Posterior cingulate gyrus (tissue), 11 donors: ENCODE measurements at regions of chr3 and their contacts with region 1.

Region 1: DNA sequence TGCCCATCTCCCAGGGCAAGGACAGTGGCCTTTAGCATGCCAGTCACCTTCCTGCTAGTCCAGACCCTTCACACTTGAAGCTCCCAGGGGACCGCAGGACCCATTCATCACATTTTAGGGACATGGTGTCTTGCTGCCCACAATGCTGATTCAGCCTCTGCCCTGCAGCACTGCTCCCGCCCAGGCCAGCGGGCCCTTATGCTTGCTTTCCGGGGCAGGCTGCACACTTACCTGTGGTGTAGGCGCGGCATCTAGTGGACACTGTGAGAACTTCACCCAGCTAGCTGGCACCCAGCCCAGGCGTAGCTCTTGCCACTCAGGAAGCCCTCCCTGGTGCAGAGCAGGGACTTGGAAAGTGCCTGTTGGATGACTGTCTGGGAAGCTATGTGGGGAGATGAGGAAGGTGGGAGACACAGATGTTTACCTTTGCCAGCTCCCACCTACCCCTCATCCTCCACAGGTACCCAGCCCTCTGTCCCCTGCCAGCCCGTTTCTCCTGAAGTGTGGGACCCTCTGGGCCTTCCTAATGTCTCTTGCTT is 26.2 kb upstream of the NR2C2 start:
- DNase-seq: peak; percentile 65 to 98 (median 87)

Region 2: GRCh38 chr3:14203521-14204079 is 717.5 kb before region 1 on chr3:
- intact Hi-C with region 1: loop called (anchors 10 kb)
- DNase-seq: peak in 7 of 10 donors; percentile 33 to 94 (median 74)

Region 3: GRCh38 chr3:14508961-14509795 is 412.0 kb before region 1 on chr3:
- intact Hi-C with region 1: loop called (anchors 2 kb)
- DNase-seq: peak in 9 of 10 donors; percentile 42 to 94 (median 66)

Region 4: GRCh38 chr3:14678015-14678503 is 243.1 kb before region 1 on chr3:
- intact Hi-C with region 1: loop called (anchors 1 kb)
- DNase-seq: no peak

Region 5: DNA sequence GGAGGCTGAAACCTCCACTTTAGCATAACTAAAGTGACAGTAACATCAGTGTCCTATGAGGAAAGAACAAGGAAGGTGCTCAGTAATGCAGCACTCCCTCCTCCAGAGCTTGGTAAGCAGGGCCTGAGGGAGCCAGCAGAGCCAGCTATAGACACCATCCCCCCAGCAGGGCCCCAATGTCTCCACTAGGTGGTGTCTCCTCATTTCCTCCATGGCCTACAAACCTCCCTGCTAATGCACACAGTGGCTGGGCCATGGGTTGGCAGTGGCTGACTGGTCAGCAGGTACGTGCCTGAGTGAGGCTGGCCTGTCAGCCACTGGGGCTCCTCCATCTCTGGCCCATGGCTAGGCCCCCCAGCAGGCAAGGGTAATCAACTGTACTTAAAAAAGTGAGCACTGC is 130.4 kb after region 1 on chr3:
- intact Hi-C with region 1: loop called (anchors 10 kb)
- DNase-seq: peak in 2 of 10 donors; percentile 22 to 89